ENCODE measurements at regions of chr17 and their contacts with region 1.

Region 1: DNA sequence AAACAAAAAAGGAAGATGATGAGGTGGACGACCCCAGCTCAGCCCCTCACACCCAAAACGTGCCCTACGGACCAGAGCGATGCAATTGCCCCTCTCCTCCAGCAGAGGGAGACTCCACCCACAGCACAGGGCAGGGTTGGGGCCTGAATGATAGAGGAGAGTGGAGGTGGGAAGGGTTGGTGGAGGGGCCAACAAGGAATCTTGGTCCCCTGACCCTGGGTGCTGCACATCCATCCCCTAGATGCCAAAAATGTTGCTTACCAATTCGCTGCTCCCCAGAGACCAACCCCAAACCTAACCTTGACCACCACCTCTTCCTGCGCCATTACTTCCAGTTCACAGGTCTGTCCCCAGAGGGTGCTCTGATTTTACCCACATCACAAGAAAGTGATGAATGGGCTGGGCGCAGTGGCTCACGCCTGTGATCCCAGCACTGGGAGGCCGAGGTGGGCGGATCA is 12.9 kb downstream of the P2RX5 start:
- H3K4me3 Mint-ChIP-seq: no peak overlapping the region
- H3K27ac Mint-ChIP-seq: no peak overlapping the region
- H3K4me1 Mint-ChIP-seq: peaks cover 38% of the 10 kb centered on the region
- H3K27me3 Mint-ChIP-seq: peaks cover 25% of the 10 kb centered on the region

Region 2: GRCh38 chr17:3732210-3732621 is 49.1 kb after region 1 on chr17:
- intact Hi-C with region 1: loop called (anchors 2 kb)
- H3K4me3 Mint-ChIP-seq: no peak overlapping the region
- H3K27ac Mint-ChIP-seq: no peak overlapping the region
- H3K4me1 Mint-ChIP-seq: peaks cover 4% of the 10 kb centered on the region
- H3K27me3 Mint-ChIP-seq: peaks cover 2% of the 10 kb centered on the region

Measured in dendritic cell treated with granulocyte-macrophage colony-stimulating factor and Interleukin-4, amounts not matched to agents 40 ng/mL and 50 ng/mL, for 4 days (primary cell).